Activated CD4-positive, alpha-beta T cell treated with anti-CD3 and anti-CD28 coated beads for 36 hours (primary cell): ENCODE measurements at regions of chr15 and their contacts with region 1.

Region 1: DNA sequence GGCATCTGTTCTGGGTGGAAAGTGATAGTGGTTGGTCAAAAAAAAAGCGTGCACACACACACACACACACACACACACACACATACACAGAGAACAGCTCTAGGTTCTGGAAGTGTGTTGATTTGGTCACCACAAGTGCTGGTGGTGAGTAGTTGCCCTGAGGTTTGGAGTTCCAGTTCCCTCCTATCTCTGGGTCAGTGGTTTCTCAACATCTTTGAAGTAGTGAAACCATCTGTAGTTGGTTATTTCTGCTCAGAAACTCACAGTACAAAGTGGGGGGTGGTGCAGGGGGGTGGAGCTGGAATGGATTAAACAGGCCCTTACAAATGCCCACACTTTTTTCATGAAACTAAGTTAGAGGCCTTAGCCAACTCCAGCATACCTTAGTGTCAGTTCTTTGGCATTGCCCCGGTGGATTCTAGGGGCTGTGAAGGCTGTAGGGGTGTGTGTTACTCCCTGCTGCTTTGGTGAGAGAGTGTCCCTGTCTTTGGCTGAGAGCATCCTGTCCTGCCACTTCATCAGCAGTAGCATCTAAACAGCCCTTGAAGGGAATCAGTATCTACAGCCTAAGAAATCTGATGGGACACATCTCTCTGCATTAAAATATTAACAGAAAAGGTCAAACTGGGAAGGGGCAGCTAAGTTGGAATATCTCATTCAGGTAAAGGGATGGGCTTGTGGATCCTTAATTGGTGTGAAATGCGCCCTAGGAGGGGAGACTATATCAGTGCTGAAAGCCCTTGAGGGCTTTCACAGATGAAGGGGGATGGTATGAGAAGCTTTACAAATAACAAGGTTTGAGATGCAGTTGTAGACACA is 20.6 kb downstream of the SMAD3 start:
- DNase-seq: peak; percentile 53
- ATAC-seq: peak; percentile 40
- H3K4me3 Mint-ChIP-seq: peak overlapping the region; percentile 52
- H3K27ac Mint-ChIP-seq: peak overlapping the region; percentile 82
- H3K4me1 Mint-ChIP-seq: peaks cover 97% of the 10 kb centered on the region
- H3K27me3 Mint-ChIP-seq: no peaks in the 10 kb centered on the region

Region 2: GRCh38 chr15:66440501-66440900 is 645.5 kb before region 1 on chr15:
- CTCF ChIA-PET with region 1: no interaction called
- POLR2A ChIA-PET with region 1: no interaction called
- intact Hi-C with region 1: no loop called
- DNase-seq: no peak
- ATAC-seq: no peak
- H3K4me3 Mint-ChIP-seq: no peak overlapping the region
- H3K27ac Mint-ChIP-seq: no peak overlapping the region
- H3K4me1 Mint-ChIP-seq: no peaks in the 10 kb centered on the region
- H3K27me3 Mint-ChIP-seq: no peaks in the 10 kb centered on the region

Region 3: GRCh38 chr15:67043939-67044771 is 41.9 kb before region 1 on chr15:
- CTCF ChIA-PET with region 1: interaction called, 4 read pairs
- POLR2A ChIA-PET with region 1: interaction called, 3 read pairs
- intact Hi-C with region 1: loop called in 1 of 2 experiments (anchors 1 kb)
- DNase-seq: no peak
- ATAC-seq: no peak
- H3K4me3 Mint-ChIP-seq: no peak overlapping the region
- H3K27ac Mint-ChIP-seq: no peak overlapping the region
- H3K4me1 Mint-ChIP-seq: peaks cover 29% of the 10 kb centered on the region
- H3K27me3 Mint-ChIP-seq: no peaks in the 10 kb centered on the region

Region 4: DNA sequence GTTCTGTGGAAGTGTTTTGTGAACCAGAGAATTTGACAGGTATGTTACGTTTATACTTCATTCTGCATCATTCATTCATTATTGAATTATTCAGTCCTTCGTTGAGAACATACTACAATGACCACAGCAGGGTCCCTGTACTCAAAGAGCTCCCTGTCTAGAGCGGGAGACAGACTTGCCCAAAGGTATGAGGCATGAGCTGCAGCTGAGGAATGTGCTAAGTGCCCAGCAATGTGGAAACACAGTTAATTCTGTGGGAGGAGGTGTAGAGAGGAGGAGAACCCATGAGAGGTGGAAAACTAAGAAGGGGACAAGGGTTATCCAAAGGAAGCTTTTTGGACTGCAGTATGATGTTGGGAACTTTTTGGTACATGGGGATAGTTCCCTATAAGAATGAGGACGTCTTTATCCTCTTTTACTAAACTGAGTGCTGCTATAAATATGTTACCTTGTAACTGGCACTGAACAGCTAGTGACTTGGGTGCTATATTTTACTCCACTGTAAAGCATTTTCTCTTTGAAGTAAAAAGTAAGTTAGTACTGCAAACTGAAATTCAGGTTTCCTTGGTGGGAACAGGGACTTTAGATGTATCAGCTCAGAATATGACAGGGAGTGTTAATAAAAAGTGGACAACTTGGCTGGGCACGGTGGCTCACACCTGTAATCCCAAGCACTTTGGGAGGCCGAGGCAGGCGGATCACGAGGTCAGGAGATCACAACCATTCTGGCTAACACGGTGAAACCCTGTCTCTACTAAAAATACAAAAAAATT is 14.9 kb before region 1 on chr15:
- CTCF ChIA-PET with region 1: interaction called, 45 read pairs
- POLR2A ChIA-PET with region 1: interaction called, 10 read pairs
- intact Hi-C with region 1: loop called (anchors 1 kb)
- DNase-seq: no peak
- ATAC-seq: no peak
- H3K4me3 Mint-ChIP-seq: no peak overlapping the region
- H3K27ac Mint-ChIP-seq: no peak overlapping the region
- H3K4me1 Mint-ChIP-seq: peaks cover 81% of the 10 kb centered on the region
- H3K27me3 Mint-ChIP-seq: no peaks in the 10 kb centered on the region

Region 5: DNA sequence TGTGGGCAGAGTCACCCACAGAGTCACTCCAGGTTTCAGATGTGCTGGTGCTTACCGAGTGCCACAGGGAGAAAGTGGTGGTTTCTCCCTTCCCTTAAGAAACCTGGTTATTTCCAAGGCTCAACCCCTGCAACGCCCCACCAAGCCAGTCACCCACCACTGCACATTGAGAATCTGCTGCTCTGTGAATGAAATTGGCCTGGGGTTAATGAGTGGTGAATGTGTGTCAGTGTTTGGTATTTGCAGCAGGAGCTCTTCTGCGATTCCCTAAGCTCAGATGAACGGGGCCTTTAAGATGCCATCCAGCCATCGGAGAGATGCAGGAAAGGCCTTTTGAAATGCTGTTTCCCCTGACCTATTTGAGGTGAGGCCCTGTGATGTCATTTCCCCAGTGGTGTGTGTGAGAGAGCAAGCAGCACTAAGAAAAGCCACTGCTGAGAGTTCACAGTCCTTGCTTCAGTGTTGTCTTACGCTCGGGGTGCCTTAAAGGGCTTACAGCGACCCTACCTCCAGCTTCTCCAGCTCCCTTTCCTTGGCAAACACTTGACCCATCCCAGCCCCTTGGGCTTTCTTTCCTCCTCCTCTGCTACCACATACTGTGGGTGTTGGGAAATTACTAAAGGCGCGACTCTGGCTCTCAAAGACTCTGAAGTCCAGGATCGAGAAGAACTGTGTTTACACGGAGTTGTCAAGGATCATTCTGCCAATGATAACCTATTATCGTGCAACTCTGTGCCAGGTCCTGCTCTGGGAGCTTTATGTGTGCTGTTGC is 48.2 kb after region 1 on chr15:
- CTCF ChIA-PET with region 1: interaction called, 4 read pairs
- POLR2A ChIA-PET with region 1: no interaction called
- intact Hi-C with region 1: loop called in 1 of 2 experiments (anchors 2 kb)
- DNase-seq: peak; percentile 78
- ATAC-seq: peak; percentile 86
- H3K4me3 Mint-ChIP-seq: peak overlapping the region; percentile 80
- H3K27ac Mint-ChIP-seq: peak overlapping the region; percentile 98
- H3K4me1 Mint-ChIP-seq: peaks cover 87% of the 10 kb centered on the region
- H3K27me3 Mint-ChIP-seq: no peaks in the 10 kb centered on the region

Region 6: GRCh38 chr15:67303490-67304363 is 217.7 kb after region 1 on chr15:
- CTCF ChIA-PET with region 1: interaction called, 3 read pairs
- POLR2A ChIA-PET with region 1: no interaction called
- intact Hi-C with region 1: loop called (anchors 5 to 10 kb)
- DNase-seq: peak; percentile 22
- ATAC-seq: no peak
- H3K4me3 Mint-ChIP-seq: no peak overlapping the region
- H3K27ac Mint-ChIP-seq: no peak overlapping the region
- H3K4me1 Mint-ChIP-seq: peaks cover 16% of the 10 kb centered on the region
- H3K27me3 Mint-ChIP-seq: peaks cover 3% of the 10 kb centered on the region